ENCODE measurements at regions of chr3 and their contacts with region 1.

Region 1: DNA sequence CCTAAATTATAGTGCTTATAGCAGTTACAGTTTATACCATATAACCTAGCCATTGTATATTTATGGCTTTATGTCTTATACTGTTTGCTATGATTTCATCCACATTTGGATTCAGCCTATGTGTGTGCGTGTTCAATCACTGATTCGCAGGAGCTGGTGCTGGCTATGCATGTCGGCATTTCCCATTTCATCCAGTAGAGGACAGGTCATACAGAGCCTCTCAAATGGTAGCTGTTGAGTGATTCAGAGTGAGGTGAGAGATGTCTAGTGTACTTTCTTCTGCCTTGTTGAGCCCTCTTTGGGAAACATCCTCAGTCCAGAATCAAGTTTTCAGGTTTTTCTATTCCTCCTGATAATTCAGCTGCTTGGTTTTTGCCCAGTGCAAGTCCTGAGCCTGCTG is 76.1 kb downstream of the FRMD4B start:
- DNase-seq: no peak

Region 2: DNA sequence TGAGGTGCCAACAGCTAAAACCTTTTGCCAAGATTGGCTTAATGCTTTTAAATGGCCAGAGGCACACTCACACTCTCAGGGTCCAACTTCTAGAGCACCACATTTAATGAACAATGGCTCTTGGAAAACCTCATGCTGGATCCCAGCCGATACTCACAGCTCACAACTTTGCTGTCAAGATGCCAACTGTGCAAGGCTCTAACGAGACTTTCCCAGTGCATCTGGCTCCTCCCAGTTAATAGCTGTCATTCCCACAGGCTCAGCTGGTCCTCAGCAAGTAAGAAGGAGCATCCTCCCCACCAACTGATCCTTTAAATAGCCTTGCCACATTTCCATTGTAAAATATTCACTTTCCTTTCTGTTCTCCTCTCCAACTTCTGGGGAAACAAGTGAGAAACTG is 96.3 kb after region 1 on chr3:
- in situ Hi-C with region 1: loop called (anchors 10 kb)
- DNase-seq: no peak

Measured in Caki2 (cell line).